ENCODE measurements at regions of chr5 and their contacts with region 1.

Region 1: GRCh38 chr5:902129-902916 is 9.6 kb downstream of the TRIP13 start:
- DNase-seq: no peak

Region 2: DNA sequence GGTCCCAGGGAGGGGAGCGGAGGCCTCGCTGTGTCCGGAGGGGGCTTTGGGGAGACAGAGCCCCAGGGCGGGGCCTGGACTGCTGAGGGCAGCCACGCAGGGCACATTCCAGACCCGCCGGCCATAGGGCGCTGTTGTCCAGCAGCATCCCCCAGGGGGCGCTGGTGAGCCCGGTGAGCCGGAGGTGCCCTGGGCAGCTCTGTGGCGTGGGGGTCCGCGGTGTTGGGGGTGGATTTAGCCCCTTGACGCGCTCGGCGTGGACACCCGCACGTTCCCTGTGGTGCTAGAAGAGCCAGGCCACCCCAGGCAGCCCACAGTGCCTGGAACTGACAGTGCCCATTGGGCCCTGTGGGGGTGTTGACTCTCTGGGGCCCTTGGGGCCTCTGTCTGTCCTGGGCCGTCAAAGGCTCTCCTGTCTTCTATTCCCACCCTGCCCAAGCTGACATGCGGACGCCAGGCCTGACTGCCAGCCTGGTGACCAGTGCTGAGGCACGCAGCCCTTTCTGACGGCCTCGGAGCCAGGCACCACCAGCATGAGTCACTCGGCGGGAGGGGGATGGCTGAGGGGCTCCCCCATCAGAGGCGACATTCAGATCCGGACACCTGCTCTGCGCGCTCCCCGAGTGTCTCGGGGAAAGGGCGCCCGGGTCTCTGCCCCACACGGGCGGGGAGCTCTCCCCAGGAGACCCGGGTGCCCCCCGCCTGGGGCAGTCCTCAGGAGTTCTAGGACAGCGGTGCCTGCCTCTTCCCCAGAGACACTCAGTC is 233.0 kb before region 1 on chr5:
- intact Hi-C with region 1: loop called (anchors 2 kb)
- DNase-seq: no peak

Region 3: DNA sequence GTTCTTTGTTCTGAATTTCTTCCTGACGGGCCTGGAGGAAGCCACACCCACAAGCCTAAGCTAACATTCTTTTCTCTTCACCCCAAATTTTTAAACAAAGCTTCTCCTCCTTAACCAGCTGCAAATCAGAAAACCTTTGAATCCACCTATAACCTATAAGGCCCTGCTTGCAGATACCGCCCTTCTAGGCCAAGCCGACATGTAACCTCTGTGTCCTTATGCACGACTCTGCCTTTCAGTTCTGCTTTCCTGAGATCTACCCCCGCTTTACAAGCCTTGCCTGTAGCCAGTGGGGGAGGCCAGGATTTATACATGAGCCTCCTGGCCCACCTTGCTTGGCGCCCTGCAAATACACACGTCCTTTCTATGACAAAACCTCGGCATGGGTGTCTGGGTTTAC is 29.0 kb before region 1 on chr5:
- intact Hi-C with region 1: no loop called
- DNase-seq: no peak

Measured in cardiac septum (tissue), 1 donor.